Panc1 (cell line): ENCODE measurements at regions of chr12 and their contacts with region 1.

Region 1: GRCh38 chr12:45655201-45655600 is 74.3 kb upstream of the ARID2 start:
- DNase-seq: no peak
- ATAC-seq: no peak
- H3K4me3 ChIP-seq: no peak overlapping the region
- H3K27ac ChIP-seq: no peak overlapping the region
- H3K4me1 ChIP-seq: no peaks in the 10 kb centered on the region
- H3K27me3 ChIP-seq: no peaks in the 10 kb centered on the region
- CTCF ChIP-seq: no peak

Region 2: DNA sequence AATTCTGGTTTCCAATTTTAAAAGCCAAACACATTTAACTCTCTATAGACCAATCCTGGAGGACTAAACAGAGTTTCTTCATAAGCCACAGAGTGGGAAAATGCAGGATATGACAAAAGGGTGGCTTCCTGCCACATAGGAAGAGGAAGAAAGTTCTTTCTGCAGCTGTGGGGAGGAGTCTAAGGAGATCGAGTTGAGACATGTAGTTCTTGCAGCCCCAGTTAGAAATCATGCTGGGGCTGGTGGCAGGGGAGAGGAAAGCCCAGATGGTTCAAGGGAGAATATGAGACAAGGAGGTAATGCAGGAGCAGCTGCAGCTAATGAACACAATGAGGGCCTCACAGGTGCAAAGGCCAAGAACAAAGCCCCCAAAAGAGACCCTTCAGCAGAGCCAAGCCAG is 10.7 kb before region 1 on chr12:
- CTCF ChIA-PET with region 1: no interaction called
- POLR2A ChIA-PET with region 1: interaction called, 16 read pairs
- in situ Hi-C with region 1: no loop called
- intact Hi-C with region 1: no loop called
- DNase-seq: no peak
- ATAC-seq: no peak
- H3K4me3 ChIP-seq: no peak overlapping the region
- H3K27ac ChIP-seq: no peak overlapping the region
- H3K4me1 ChIP-seq: no peaks in the 10 kb centered on the region
- H3K27me3 ChIP-seq: peaks cover 2% of the 10 kb centered on the region; the same call in 1 of the 2 replicates
- CTCF ChIP-seq: no peak

Region 3: DNA sequence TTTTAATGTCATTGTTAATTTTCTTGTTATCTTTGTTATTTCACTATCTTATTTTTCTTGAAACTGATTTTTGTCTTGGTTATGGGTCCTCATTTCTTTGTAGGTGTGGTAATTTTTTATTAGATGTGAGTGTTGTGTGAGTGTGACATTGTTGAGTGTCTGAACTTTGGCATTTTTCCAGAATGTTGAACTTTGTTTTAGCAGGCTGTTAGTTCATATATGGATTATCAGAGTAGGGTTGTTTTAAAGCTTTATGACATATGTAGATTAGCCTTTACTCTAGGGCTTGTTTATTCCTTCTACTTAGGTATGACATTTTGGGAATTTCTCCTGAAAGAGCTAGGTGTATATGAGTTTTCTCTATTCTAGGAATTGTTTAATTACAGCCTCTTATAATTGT is 178.2 kb after region 1 on chr12:
- CTCF ChIA-PET with region 1: no interaction called
- POLR2A ChIA-PET with region 1: no interaction called
- in situ Hi-C with region 1: no loop called
- intact Hi-C with region 1: no loop called
- DNase-seq: no peak
- ATAC-seq: no peak
- H3K4me3 ChIP-seq: no peak overlapping the region
- H3K27ac ChIP-seq: no peak overlapping the region
- H3K4me1 ChIP-seq: no peaks in the 10 kb centered on the region
- H3K27me3 ChIP-seq: no peaks in the 10 kb centered on the region
- CTCF ChIP-seq: no peak

Region 4: GRCh38 chr12:45966486-45966885 is 311.3 kb after region 1 on chr12:
- CTCF ChIA-PET with region 1: no interaction called
- POLR2A ChIA-PET with region 1: no interaction called
- in situ Hi-C with region 1: no loop called
- intact Hi-C with region 1: no loop called
- DNase-seq: no peak
- ATAC-seq: peak; percentile 83; the same call in 1 of the 2 replicates
- H3K4me3 ChIP-seq: no peak overlapping the region
- H3K27ac ChIP-seq: no peak overlapping the region; the same call in 1 of the 2 replicates
- H3K4me1 ChIP-seq: peaks cover 7% of the 10 kb centered on the region; the same call in 1 of the 2 replicates
- H3K27me3 ChIP-seq: no peaks in the 10 kb centered on the region
- CTCF ChIP-seq: no peak